SK-N-SH (cell line): ENCODE measurements at regions of chr5 and their contacts with region 1.

Region 1: DNA sequence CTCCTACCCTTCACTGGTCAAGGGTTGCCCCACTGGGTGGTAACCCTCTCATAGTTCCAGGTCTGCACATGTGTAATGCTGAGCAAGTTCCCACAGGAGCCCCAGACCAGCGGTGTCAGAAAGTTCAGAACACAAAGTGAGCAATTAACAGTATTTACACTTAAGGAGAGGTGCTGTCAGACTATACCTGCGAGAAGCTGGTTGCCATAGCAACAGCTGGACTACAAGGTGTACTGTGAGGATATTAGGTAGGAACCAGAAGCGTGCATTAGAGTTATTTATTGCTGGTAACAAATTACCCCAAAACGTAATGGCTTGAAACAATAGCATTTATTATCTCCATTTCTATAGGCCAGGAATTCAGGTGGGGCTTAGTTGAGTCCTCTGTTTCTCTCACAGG is 317.0 kb upstream of the RPS23 start:
- DNase-seq: no peak
- H3K4me3 ChIP-seq: no peak overlapping the region
- H3K27ac ChIP-seq: no peak overlapping the region
- H3K4me1 ChIP-seq: no peaks in the 10 kb centered on the region; a peak in 1 of 4 replicates
- H3K27me3 ChIP-seq: no peaks in the 10 kb centered on the region
- CTCF ChIP-seq: no peak
- EP300 ChIP-seq: no peak
- RAD21 ChIP-seq: no peak

Region 2: GRCh38 chr5:82445726-82446335 is 149.3 kb before region 1 on chr5:
- CTCF ChIA-PET with region 1: no interaction called
- POLR2A ChIA-PET with region 1: no interaction called
- DNase-seq: no peak
- H3K4me3 ChIP-seq: no peak overlapping the region
- H3K27ac ChIP-seq: no peak overlapping the region
- H3K4me1 ChIP-seq: peaks cover 0 to 9% of the 10 kb centered on the region in 2 experiments; a peak in 2 of 4 replicates
- H3K27me3 ChIP-seq: no peaks in the 10 kb centered on the region
- CTCF ChIP-seq: no peak
- EP300 ChIP-seq: no peak
- RAD21 ChIP-seq: no peak

Region 3: GRCh38 chr5:82522897-82523296 is 72.2 kb before region 1 on chr5:
- CTCF ChIA-PET with region 1: no interaction called
- POLR2A ChIA-PET with region 1: interaction called, 10 read pairs
- DNase-seq: no peak
- H3K4me3 ChIP-seq: no peak overlapping the region
- H3K27ac ChIP-seq: no peak overlapping the region
- H3K4me1 ChIP-seq: peaks cover 2 to 5% of the 10 kb centered on the region in 2 experiments; a peak in 1 of 4 replicates
- H3K27me3 ChIP-seq: no peaks in the 10 kb centered on the region
- CTCF ChIP-seq: no peak
- EP300 ChIP-seq: no peak
- RAD21 ChIP-seq: no peak

Region 4: DNA sequence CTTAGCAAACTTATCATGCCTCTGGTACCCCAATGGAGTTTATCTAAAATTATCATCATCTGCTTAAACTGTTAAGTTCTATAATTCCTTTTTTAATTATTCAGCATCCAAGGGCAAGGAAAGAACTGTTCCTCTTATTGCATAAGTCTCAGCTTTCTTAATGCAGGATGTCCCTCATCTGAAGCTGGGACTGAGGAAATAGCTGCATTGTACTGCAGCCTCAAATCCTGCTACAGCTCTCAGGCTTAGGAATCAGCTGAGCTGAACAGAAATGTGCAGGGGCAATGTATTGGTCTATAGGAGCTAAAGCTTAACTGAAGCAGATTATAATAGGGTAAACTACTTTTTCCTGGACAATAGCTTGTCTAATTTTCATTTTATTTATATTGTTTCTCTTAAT is 1077.5 kb after region 1 on chr5:
- CTCF ChIA-PET with region 1: no interaction called
- POLR2A ChIA-PET with region 1: no interaction called
- DNase-seq: no peak
- H3K4me3 ChIP-seq: no peak overlapping the region
- H3K27ac ChIP-seq: no peak overlapping the region
- H3K4me1 ChIP-seq: peaks cover 0 to 2% of the 10 kb centered on the region in 2 experiments; a peak in 1 of 4 replicates
- H3K27me3 ChIP-seq: no peaks in the 10 kb centered on the region
- CTCF ChIP-seq: no peak
- EP300 ChIP-seq: no peak
- RAD21 ChIP-seq: no peak